GM18951 (cell line): ENCODE measurements at regions of chr1 and their contacts with region 1.

Region 1: DNA sequence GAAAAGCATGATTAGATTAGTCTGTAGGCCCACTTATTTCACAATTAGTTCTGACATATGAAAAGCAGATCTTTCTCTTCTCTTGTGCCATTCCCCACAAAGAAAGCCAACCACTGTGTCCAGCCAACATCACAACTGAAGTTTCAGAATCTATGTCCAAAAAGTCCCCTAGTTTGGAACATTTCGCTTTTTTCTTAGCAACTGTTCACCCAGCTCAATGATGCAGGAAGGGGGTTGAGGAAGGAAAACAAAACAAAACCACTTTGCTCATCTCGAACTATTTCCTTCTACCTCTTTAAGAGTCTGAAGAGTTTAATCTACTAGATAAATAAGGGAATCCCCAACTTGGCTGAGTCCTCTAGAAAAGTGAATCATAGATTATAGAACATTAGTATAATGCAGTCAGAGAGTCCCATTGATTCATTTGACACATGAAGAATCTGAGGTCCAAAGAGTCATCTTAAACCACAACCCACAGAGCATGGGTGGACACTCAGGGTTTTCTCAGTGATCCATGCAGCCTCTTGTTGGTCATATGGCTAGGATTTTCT is 159.3 kb upstream of the SGIP1 start:
- POLR2A ChIP-seq: no peak

Region 2: GRCh38 chr1:66253330-66253921 is 121.2 kb before region 1 on chr1:
- in situ Hi-C with region 1: loop called (anchors 10 kb)
- POLR2A ChIP-seq: no peak

Region 3: DNA sequence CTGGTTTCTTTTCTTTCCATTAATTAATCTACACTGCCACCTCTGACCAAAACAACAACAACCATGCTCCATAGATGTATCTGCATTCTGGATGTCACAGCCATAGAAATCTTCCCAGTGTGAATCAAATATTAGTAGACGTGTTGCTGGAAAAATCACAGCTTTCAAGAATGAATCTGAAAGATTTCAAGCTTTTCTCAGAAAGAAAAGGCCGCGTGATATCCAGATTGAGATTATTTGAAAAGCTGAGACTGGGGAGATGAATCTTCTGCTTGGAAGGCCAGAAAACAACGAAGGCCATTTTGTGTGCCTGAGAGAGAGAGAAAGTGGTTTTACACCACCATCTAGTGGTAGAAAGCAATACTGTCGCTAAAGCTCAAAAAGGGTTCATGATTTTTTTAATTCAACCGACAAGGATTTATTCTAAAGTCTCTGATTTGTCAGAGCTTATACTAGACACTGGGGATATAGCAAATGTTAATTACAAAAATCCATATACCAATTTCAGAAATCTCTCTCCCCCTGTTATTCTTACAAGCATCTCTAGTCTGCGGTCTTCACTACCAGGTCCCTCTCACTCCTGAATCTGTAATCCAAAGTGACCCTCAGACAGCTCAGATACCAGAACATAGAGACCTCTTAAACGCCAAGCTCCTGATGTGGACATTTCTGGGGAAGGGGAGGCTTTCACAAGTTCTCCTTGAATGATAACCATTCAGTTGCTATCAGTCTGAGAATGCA is 71.8 kb after region 1 on chr1:
- in situ Hi-C with region 1: loop called (anchors 10 kb)
- POLR2A ChIP-seq: no peak